ENCODE measurements at regions of chr3 and their contacts with region 1.

Region 1: DNA sequence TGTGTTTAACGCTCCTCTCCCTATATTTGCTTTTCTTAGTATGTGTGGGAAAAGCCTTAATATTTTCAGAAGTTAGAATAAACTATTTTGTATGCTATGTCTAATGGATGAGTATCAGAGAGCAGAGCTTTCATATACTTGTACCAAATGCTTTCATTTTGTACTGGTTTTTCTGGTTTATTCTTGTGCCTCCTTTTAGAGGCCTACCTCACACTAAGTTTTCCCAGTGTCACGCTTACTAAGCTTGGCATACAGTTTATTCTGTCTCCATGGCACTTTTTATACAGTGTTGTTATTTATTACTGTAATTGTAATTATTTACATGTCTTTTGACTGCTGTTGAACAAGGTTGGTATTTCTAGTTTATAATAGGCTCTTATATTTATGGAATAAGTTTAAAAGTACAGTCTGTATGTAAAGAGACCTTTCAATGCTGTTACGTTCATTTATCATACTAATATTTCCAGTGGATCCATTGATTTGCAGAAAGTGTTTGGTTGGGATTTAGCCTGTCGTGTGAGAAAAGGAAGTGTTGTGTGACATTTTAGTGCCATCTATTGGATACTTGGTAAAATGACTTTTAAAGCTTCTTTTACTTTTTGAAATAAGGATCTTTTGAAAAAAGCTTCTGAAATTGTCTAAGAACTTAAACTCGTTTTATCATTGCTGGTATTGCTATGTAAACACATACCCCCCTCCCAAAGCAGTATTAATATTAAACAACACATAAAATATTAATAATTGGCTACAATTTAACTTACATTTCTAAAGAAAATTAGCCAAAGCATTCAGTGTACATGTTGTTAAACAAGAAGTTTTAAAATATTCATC is 5.2 kb upstream of the EBLN2 start:
- DNase-seq: no peak
- ATAC-seq: no peak
- H3K4me3 Mint-ChIP-seq: no peak overlapping the region
- H3K27ac Mint-ChIP-seq: no peak overlapping the region
- H3K4me1 Mint-ChIP-seq: peaks cover 8% of the 10 kb centered on the region
- H3K27me3 Mint-ChIP-seq: no peaks in the 10 kb centered on the region

Region 2: GRCh38 chr3:72938471-72939265 is 117.6 kb before region 1 on chr3:
- CTCF ChIA-PET with region 1: interaction called, 75 read pairs
- POLR2A ChIA-PET with region 1: no interaction called
- DNase-seq: peak; percentile 41
- ATAC-seq: peak; percentile 96
- H3K4me3 Mint-ChIP-seq: no peak overlapping the region
- H3K27ac Mint-ChIP-seq: no peak overlapping the region
- H3K4me1 Mint-ChIP-seq: no peaks in the 10 kb centered on the region
- H3K27me3 Mint-ChIP-seq: peaks cover 20% of the 10 kb centered on the region

Region 3: DNA sequence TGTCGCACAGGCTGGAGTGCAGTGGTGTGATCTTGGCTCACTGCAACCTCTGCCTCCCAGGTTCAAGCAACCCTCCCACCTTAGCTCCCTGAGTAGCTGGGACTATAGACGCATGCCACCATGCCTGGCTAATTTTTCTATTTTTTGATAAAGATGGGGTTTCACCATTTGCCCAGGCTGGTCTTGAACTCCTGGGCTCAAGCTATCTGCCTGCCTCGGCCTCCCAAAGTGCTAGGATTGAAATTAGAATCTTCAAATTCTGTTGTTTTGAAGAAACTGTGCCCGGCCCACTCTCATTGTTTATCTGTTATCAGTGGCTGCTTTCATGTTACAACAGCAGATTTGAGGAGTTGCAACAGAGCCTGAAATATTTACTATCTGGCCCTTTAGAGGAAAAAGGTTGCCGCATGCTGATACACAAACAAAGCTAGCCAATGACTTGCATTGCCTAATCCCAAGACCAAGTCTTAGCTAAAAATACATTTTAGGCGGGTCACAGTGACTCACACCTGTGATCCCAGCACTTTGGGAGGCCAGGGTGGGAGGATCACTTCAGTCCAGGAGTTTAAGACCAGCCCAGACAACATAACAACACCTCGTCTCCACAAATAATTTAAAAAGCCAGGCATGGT is 102.8 kb before region 1 on chr3:
- CTCF ChIA-PET with region 1: interaction called, 37 read pairs
- POLR2A ChIA-PET with region 1: no interaction called
- DNase-seq: no peak
- ATAC-seq: no peak
- H3K4me3 Mint-ChIP-seq: no peak overlapping the region
- H3K27ac Mint-ChIP-seq: no peak overlapping the region
- H3K4me1 Mint-ChIP-seq: peaks cover 20% of the 10 kb centered on the region
- H3K27me3 Mint-ChIP-seq: peaks cover 2% of the 10 kb centered on the region

Region 4: GRCh38 chr3:72996473-72997333 is 59.5 kb before region 1 on chr3 and contains the start of gene PPP4R2:
- CTCF ChIA-PET with region 1: interaction called, 55 read pairs
- POLR2A ChIA-PET with region 1: interaction called, 3 read pairs
- DNase-seq: peak; percentile 93
- ATAC-seq: peak; percentile 87
- H3K4me3 Mint-ChIP-seq: peak within 1 kb of the TSS; percentile 86
- H3K27ac Mint-ChIP-seq: peak within 1 kb of the TSS; percentile 93
- H3K4me1 Mint-ChIP-seq: peaks cover 31% of the 10 kb centered on the region
- H3K27me3 Mint-ChIP-seq: no peaks in the 10 kb centered on the region
- total RNA-seq, gene PPP4R2: 80.0 to 80.9 TPM

Region 5: GRCh38 chr3:73045391-73045790 is 10.8 kb before region 1 on chr3:
- CTCF ChIA-PET with region 1: interaction called, 19 read pairs
- POLR2A ChIA-PET with region 1: no interaction called
- DNase-seq: no peak
- ATAC-seq: no peak
- H3K4me3 Mint-ChIP-seq: no peak overlapping the region
- H3K27ac Mint-ChIP-seq: no peak overlapping the region
- H3K4me1 Mint-ChIP-seq: peaks cover 18% of the 10 kb centered on the region
- H3K27me3 Mint-ChIP-seq: no peaks in the 10 kb centered on the region

Region 6: GRCh38 chr3:73086071-73086494 is 29.9 kb after region 1 on chr3:
- CTCF ChIA-PET with region 1: interaction called, 13 read pairs
- POLR2A ChIA-PET with region 1: no interaction called
- DNase-seq: peak; percentile 60
- ATAC-seq: peak; percentile 69
- H3K4me3 Mint-ChIP-seq: no peak overlapping the region
- H3K27ac Mint-ChIP-seq: no peak overlapping the region
- H3K4me1 Mint-ChIP-seq: peaks cover 8% of the 10 kb centered on the region
- H3K27me3 Mint-ChIP-seq: peaks cover 5% of the 10 kb centered on the region

Region 7: DNA sequence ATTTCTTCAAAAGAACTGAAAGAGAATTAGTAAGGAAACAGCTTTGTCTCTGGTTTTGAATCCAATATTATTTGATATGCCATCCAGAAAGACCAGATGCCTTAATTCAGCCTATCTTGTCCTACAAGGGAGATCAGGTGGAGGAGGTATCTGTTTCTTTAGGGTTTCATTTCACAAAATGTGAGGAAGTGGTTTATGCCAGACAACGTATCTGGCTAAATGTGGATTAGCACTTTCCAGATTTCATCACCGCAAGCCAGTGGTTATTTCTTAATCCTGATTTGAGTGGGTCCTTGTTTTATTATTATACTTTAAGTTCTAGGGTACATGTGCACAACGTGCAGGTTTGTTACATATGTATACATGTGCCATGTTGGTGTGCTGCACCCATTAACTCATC is 276.3 kb after region 1 on chr3:
- CTCF ChIA-PET with region 1: no interaction called
- POLR2A ChIA-PET with region 1: no interaction called
- DNase-seq: no peak
- ATAC-seq: no peak
- H3K4me3 Mint-ChIP-seq: no peak overlapping the region
- H3K27ac Mint-ChIP-seq: no peak overlapping the region
- H3K4me1 Mint-ChIP-seq: no peaks in the 10 kb centered on the region
- H3K27me3 Mint-ChIP-seq: no peaks in the 10 kb centered on the region